HCT116 (cell line): ENCODE measurements at regions of chr1 and their contacts with region 1.

Region 1: DNA sequence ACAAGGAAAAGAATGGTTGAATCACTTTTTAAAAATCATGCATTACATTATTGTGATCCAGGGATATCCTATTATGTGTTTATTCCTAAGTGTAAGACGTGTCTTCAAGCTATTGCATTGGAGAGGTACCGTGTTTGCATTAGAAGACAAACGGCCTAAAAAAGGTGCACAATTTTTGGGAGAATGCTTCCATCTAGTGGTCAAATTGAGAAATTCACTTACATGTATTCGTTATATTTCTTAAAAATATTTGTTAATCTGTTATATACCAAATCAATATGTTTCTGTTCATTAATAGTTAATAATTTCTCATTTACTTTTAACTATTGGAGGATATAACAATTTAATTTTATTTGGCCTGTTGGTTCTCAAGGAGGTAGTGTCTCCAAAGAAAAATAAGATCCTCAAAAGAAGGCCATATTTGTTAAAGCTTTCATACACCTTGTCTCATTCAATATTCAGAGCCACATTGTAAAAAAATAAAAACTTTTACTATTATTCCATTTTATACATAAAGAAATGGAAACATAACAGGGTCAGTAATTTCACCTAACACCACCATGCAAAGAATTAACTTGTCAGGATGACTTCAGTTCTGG is 40.5 kb upstream of the KCTD3 start:
- DNase-seq: peak; percentile 43
- ATAC-seq: peak; percentile 70
- H3K4me3 ChIP-seq: no peak overlapping the region
- H3K27ac ChIP-seq: no peak overlapping the region
- H3K4me1 ChIP-seq: no peaks in the 10 kb centered on the region
- H3K27me3 ChIP-seq: no peaks in the 10 kb centered on the region
- CTCF ChIP-seq: peak; percentile 32 to 63 (median 55); a peak in 4 of 6 replicates
- POLR2A ChIP-seq: no peak
- RAD21 ChIP-seq: peak; percentile 86

Region 2: DNA sequence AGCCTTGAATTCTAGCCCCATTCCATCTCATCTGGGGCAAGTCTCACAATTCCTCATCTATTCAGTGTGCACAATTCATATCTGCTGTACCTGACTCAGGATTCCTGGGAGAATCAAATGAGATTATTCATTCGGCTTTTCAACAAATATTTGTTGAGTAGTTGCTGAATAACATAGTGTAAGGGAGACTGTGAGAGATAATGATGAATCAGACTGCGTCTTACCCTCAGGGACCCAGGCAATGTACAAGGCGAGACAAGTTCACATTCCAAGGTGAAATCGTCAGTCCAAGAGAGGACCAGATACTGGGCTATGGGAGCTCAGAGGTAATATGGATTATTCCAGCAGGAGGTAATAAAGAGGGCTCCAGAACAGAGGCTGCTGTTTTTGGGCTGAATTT is 1313.5 kb before region 1 on chr1:
- CTCF ChIA-PET with region 1: interaction called, 4 read pairs
- POLR2A ChIA-PET with region 1: no interaction called
- RAD21 ChIA-PET with region 1: interaction called in 1 of 2 experiments, 3 read pairs
- intact Hi-C with region 1: loop called (anchors 5 kb)
- DNase-seq: no peak
- ATAC-seq: no peak
- H3K4me3 ChIP-seq: no peak overlapping the region
- H3K27ac ChIP-seq: no peak overlapping the region
- H3K4me1 ChIP-seq: peaks cover 0 to 4% of the 10 kb centered on the region in 2 experiments; a peak in 1 of 4 replicates
- H3K27me3 ChIP-seq: peaks cover 7% of the 10 kb centered on the region
- CTCF ChIP-seq: no peak
- POLR2A ChIP-seq: no peak
- RAD21 ChIP-seq: no peak

Region 3: DNA sequence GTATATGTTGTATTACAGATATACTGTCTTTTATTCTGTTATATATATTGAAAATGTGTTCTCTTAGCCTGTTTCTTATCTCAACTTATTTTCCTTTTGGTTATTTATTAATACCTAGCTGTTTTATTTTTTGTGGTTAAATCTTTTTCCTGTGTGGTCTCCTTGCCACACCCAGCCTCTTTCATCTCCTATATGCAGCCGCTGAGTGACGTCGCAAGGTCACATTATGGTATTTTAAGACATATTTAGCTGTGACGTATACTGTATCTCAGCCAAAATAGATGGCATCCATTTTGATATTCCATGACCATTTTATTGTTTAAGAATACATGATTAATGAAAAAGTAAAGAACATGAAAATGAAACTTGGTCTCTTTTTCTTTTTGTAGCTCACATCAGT is 894.6 kb before region 1 on chr1:
- CTCF ChIA-PET with region 1: interaction called, 10 read pairs
- POLR2A ChIA-PET with region 1: no interaction called
- RAD21 ChIA-PET with region 1: no interaction called
- intact Hi-C with region 1: loop called (anchors 1 kb)
- DNase-seq: no peak
- ATAC-seq: no peak
- H3K4me3 ChIP-seq: no peak overlapping the region
- H3K27ac ChIP-seq: no peak overlapping the region
- H3K4me1 ChIP-seq: no peaks in the 10 kb centered on the region
- H3K27me3 ChIP-seq: no peaks in the 10 kb centered on the region
- CTCF ChIP-seq: no peak
- POLR2A ChIP-seq: no peak
- RAD21 ChIP-seq: no peak

Region 4: GRCh38 chr1:214637722-214638458 is 888.8 kb before region 1 on chr1:
- CTCF ChIA-PET with region 1: interaction called, 5 read pairs
- POLR2A ChIA-PET with region 1: no interaction called
- RAD21 ChIA-PET with region 1: no interaction called
- intact Hi-C with region 1: loop called (anchors 2 kb)
- DNase-seq: peak; percentile 34
- ATAC-seq: peak; percentile 62
- H3K4me3 ChIP-seq: no peak overlapping the region
- H3K27ac ChIP-seq: no peak overlapping the region
- H3K4me1 ChIP-seq: no peaks in the 10 kb centered on the region
- H3K27me3 ChIP-seq: no peaks in the 10 kb centered on the region
- CTCF ChIP-seq: peak; percentile 44 to 76 (median 68); a peak in 5 of 6 replicates
- POLR2A ChIP-seq: no peak
- RAD21 ChIP-seq: peak; percentile 55

Region 5: GRCh38 chr1:214658786-214659185 is 867.9 kb before region 1 on chr1:
- CTCF ChIA-PET with region 1: interaction called, 4 read pairs
- POLR2A ChIA-PET with region 1: no interaction called
- RAD21 ChIA-PET with region 1: no interaction called
- intact Hi-C with region 1: loop called (anchors 2 kb)
- DNase-seq: no peak
- ATAC-seq: peak; percentile 44; the same call in 1 of the 2 replicates
- H3K4me3 ChIP-seq: no peak overlapping the region
- H3K27ac ChIP-seq: no peak overlapping the region
- H3K4me1 ChIP-seq: no peaks in the 10 kb centered on the region
- H3K27me3 ChIP-seq: no peaks in the 10 kb centered on the region
- CTCF ChIP-seq: peak; percentile 22 to 33 (median 25); a peak in 3 of 6 replicates
- POLR2A ChIP-seq: no peak
- RAD21 ChIP-seq: peak; percentile 56

Region 6: GRCh38 chr1:214808845-214809460 is 717.7 kb before region 1 on chr1:
- CTCF ChIA-PET with region 1: interaction called, 12 read pairs
- POLR2A ChIA-PET with region 1: no interaction called
- RAD21 ChIA-PET with region 1: no interaction called
- intact Hi-C with region 1: loop called (anchors 1 kb)
- DNase-seq: peak; percentile 22
- ATAC-seq: peak; percentile 90
- H3K4me3 ChIP-seq: no peak overlapping the region
- H3K27ac ChIP-seq: no peak overlapping the region
- H3K4me1 ChIP-seq: no peaks in the 10 kb centered on the region
- H3K27me3 ChIP-seq: no peaks in the 10 kb centered on the region
- CTCF ChIP-seq: peak; percentile 34 to 53 (median 45); a peak in 4 of 6 replicates
- POLR2A ChIP-seq: no peak
- RAD21 ChIP-seq: peak; percentile 73

Region 7: GRCh38 chr1:215650446-215651149 is 123.9 kb after region 1 on chr1:
- CTCF ChIA-PET with region 1: no interaction called
- POLR2A ChIA-PET with region 1: no interaction called
- RAD21 ChIA-PET with region 1: no interaction called
- intact Hi-C with region 1: no loop called
- DNase-seq: no peak
- ATAC-seq: no peak
- H3K4me3 ChIP-seq: no peak overlapping the region
- H3K27ac ChIP-seq: no peak overlapping the region
- H3K4me1 ChIP-seq: no peaks in the 10 kb centered on the region
- H3K27me3 ChIP-seq: no peaks in the 10 kb centered on the region
- CTCF ChIP-seq: no peak
- POLR2A ChIP-seq: no peak
- RAD21 ChIP-seq: no peak